ENCODE measurements at regions of chr11 and their contacts with region 1.

Region 1: DNA sequence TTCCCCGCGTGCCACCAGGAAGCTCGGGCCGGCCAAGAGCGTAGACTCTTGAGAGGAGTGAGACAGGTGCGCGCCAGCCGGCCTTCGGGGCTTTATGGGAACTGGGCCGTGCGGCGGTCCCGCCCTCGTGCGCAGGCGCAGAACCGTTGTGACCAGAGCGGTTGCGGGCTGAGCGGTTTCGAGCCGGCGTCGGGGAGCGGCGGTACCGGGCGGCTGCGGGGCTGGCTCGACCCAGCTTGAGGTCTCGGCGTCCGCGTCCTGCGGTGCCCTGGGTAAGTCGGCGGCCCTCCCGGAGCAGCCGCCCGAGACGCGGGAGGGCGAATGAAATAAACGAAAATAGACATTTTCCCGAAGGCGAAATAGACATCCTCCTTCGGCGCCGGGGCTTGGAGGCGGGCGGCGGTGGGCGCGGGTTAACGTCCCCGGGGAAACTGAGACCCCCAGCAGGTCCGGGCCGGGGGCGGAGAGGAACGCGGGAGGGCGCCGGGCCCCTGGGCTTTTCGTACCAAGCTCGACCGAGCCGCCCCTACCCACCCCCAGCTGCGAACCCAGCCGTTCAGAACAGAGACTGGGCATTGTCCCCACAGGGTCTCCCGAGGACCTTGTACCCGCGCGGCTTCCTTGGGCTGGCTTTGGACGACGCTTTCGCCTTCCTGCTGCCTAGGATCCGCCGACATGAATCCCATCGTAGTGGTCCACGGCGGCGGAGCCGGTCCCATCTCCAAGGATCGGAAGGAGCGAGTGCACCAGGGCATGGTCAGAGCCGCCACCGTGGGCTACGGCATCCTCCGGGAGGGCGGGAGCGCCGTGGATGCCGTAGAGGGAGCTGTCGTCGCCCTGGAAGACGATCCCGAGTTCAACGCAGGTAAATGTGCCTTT is at the start of gene ASRGL1:
- DNase-seq: peak; percentile 80
- H3K4me3 ChIP-seq: peak within 1 kb of the TSS; percentile 59 to 61
- H3K27ac ChIP-seq: peak within 1 kb of the TSS; percentile 63 to 67
- H3K4me1 ChIP-seq: peaks cover 3% of the 10 kb centered on the region
- H3K27me3 ChIP-seq: no peaks in the 10 kb centered on the region
- CTCF ChIP-seq: peak in 1 of 4 experiments; percentile 19
- POLR2A ChIP-seq: peak; percentile 50
- total RNA-seq, gene ASRGL1: 27.6 to 93.0 TPM

Region 2: DNA sequence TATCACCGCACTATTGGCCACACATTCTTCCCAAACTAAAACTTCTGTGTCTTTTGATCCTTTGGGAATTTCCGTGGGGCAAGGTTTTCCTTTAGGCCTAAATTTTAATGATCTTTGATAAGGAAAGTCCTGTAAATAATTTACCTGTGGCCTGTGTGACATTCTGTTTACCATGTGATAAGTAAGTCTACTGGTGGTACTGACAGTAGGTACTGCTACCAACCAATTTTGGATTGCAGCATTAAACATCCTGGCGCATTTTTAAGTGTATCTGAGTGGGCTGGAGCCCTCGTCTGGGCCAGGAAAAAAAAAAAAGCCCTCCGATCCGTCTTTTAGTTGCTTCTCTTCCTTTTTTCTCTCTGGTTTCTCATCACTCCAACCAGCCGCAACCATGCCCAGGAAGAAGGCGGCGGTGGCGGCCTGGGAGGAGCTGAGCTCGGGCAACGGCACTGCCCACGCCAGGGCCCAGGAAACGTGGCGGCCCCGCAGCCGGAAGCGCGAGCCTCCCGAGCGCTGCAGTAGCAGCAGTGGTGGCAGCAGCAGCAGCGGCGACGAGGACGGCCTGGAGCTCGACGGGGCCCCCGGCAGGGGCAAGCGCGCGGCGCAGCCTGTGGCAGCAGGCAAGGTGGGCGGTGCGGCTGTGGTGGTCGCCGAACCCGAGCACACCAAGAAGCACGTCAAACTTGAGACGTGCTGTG is 33.4 kb after region 1 on chr11:
- intact Hi-C with region 1: loop called (anchors 5 kb)
- DNase-seq: no peak
- H3K4me3 ChIP-seq: no peak overlapping the region
- H3K27ac ChIP-seq: peak overlapping the region; percentile 20 to 58
- H3K4me1 ChIP-seq: peaks cover 4% of the 10 kb centered on the region
- H3K27me3 ChIP-seq: no peaks in the 10 kb centered on the region
- CTCF ChIP-seq: no peak
- POLR2A ChIP-seq: no peak